ENCODE measurements at regions of chr2 and their contacts with region 1.

Region 1: GRCh38 chr2:84495539-84496146 is 20.7 kb upstream of the DNAH6 start:
- DNase-seq: peak in 6 of 9 experiments; percentile 22 to 87 (median 40)
- ATAC-seq: peak; percentile 99
- H3K4me3 ChIP-seq: no peak overlapping the region
- H3K4me3 Mint-ChIP-seq: no peak overlapping the region
- H3K27ac ChIP-seq: no peak overlapping the region
- H3K27ac Mint-ChIP-seq: peak overlapping the region; percentile 30
- H3K4me1 ChIP-seq: peaks cover 5% of the 10 kb centered on the region
- H3K4me1 Mint-ChIP-seq: peaks cover 18% of the 10 kb centered on the region
- H3K27me3 ChIP-seq: no peaks in the 10 kb centered on the region
- H3K27me3 Mint-ChIP-seq: no peaks in the 10 kb centered on the region
- CTCF ChIP-seq: peak; percentile 81

Region 2: DNA sequence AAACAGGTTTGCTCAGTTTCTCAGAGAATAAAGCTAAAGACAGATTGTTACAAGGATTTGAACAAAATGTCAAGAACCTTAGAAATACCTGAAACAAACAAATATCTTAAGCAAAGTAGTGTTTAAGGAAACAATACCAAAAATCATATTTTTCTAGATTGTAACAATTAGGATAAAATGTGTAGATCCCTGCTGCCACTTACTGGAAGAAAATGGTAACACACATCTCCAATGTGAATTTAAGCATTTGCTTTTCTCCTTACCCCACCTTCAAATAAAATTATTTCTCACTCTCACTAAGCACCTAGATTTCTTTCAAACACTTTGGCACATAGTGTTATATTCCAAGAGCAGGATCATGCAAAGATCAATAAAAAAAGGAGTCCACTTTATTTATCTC is 71.5 kb before region 1 on chr2:
- CTCF ChIA-PET with region 1: no interaction called
- POLR2A ChIA-PET with region 1: no interaction called
- intact Hi-C with region 1: no loop called
- DNase-seq: no peak
- ATAC-seq: no peak
- H3K4me3 ChIP-seq: no peak overlapping the region
- H3K4me3 Mint-ChIP-seq: no peak overlapping the region
- H3K27ac ChIP-seq: no peak overlapping the region
- H3K27ac Mint-ChIP-seq: no peak overlapping the region
- H3K4me1 ChIP-seq: no peaks in the 10 kb centered on the region
- H3K4me1 Mint-ChIP-seq: peaks cover 2% of the 10 kb centered on the region
- H3K27me3 ChIP-seq: no peaks in the 10 kb centered on the region
- H3K27me3 Mint-ChIP-seq: no peaks in the 10 kb centered on the region
- CTCF ChIP-seq: peak; percentile 41

Region 3: GRCh38 chr2:84516234-84516986 is 20.8 kb after region 1 on chr2 and contains the start of gene DNAH6:
- CTCF ChIA-PET with region 1: no interaction called
- POLR2A ChIA-PET with region 1: no interaction called
- intact Hi-C with region 1: loop called in 1 of 2 experiments (anchors 1 kb)
- DNase-seq: peak; percentile 71 to 95 (median 85)
- ATAC-seq: peak; percentile 98
- H3K4me3 ChIP-seq: peak within 1 kb of the TSS; percentile 45 to 49
- H3K4me3 Mint-ChIP-seq: peak within 1 kb of the TSS; percentile 89
- H3K27ac ChIP-seq: peak within 1 kb of the TSS; percentile 56 to 74
- H3K27ac Mint-ChIP-seq: peak within 1 kb of the TSS; percentile 85
- H3K4me1 ChIP-seq: peaks cover 9% of the 10 kb centered on the region
- H3K4me1 Mint-ChIP-seq: peaks cover 18% of the 10 kb centered on the region
- H3K27me3 ChIP-seq: no peaks in the 10 kb centered on the region
- H3K27me3 Mint-ChIP-seq: no peaks in the 10 kb centered on the region
- CTCF ChIP-seq: no peak
- total RNA-seq, gene DNAH6: 0.30 to 0.61 TPM

Region 4: GRCh38 chr2:84631047-84631446 is 135.4 kb after region 1 on chr2:
- CTCF ChIA-PET with region 1: interaction called, 10 read pairs
- POLR2A ChIA-PET with region 1: interaction called, 3 read pairs
- intact Hi-C with region 1: loop called (anchors 1 kb)
- DNase-seq: peak in 2 of 9 experiments; percentile 40 to 57
- ATAC-seq: peak; percentile 51
- H3K4me3 ChIP-seq: no peak overlapping the region
- H3K4me3 Mint-ChIP-seq: no peak overlapping the region
- H3K27ac ChIP-seq: no peak overlapping the region
- H3K27ac Mint-ChIP-seq: no peak overlapping the region
- H3K4me1 ChIP-seq: peaks cover 22% of the 10 kb centered on the region
- H3K4me1 Mint-ChIP-seq: peaks cover 41% of the 10 kb centered on the region
- H3K27me3 ChIP-seq: no peaks in the 10 kb centered on the region
- H3K27me3 Mint-ChIP-seq: no peaks in the 10 kb centered on the region
- CTCF ChIP-seq: peak; percentile 51

Region 5: GRCh38 chr2:85017411-85018048 is 521.9 kb after region 1 on chr2:
- CTCF ChIA-PET with region 1: no interaction called
- POLR2A ChIA-PET with region 1: no interaction called
- intact Hi-C with region 1: loop called (anchors 1 to 2 kb)
- DNase-seq: peak in 2 of 9 experiments; percentile 23 to 39
- ATAC-seq: no peak
- H3K4me3 ChIP-seq: no peak overlapping the region
- H3K4me3 Mint-ChIP-seq: no peak overlapping the region
- H3K27ac ChIP-seq: no peak overlapping the region
- H3K27ac Mint-ChIP-seq: peak overlapping the region; percentile 64
- H3K4me1 ChIP-seq: peaks cover 15% of the 10 kb centered on the region
- H3K4me1 Mint-ChIP-seq: peaks cover 69% of the 10 kb centered on the region
- H3K27me3 ChIP-seq: no peaks in the 10 kb centered on the region
- H3K27me3 Mint-ChIP-seq: no peaks in the 10 kb centered on the region
- CTCF ChIP-seq: peak; percentile 56